A549 (cell line): ENCODE measurements at regions of chr12 and their contacts with region 1.

Region 1: DNA sequence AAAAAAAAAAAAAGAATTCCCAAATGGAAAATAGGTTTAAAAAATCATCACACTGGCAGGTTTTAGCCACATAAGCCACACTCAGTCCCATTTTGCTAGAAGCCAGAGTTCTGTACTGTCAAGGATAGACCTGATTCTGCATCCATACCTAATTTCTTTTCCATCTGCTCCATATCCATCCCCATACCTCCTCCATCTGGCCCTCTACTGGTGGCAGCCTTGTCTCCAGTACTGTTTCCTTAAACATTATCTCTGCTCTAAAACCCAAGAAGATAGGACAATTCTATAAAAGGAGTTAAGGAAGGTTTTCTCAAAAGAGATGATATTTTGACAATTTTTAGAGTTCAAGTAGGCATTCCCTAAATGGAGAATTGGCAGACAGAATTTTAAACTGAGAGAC is 26.0 kb upstream of the RXYLT1 start:
- DNase-seq: peak; percentile 12 to 22
- ATAC-seq: peak; percentile 66 to 89; a peak in 5 of 6 replicates
- H3K4me3 ChIP-seq: no peak overlapping the region
- H3K27ac ChIP-seq: no peak overlapping the region
- H3K4me1 ChIP-seq: no peaks in the 10 kb centered on the region
- CTCF ChIP-seq: 0 out of 3 replicates have a peak, but pooled peaks have one; percentile 12
- EP300 ChIP-seq: no peak
- POLR2A ChIP-seq: no peak
- RAD21 ChIP-seq: peak in 1 of 2 experiments; percentile 27; a peak in 1 of 5 replicates

Region 2: GRCh38 chr12:63766498-63766897 is 12.8 kb after region 1 on chr12:
- CTCF ChIA-PET with region 1: interaction called, 23 read pairs
- POLR2A ChIA-PET with region 1: no interaction called
- DNase-seq: no peak
- ATAC-seq: no peak
- H3K4me3 ChIP-seq: no peak overlapping the region
- H3K27ac ChIP-seq: no peak overlapping the region
- H3K4me1 ChIP-seq: no peaks in the 10 kb centered on the region
- CTCF ChIP-seq: no peak; the same call in 1 of the 3 replicates
- EP300 ChIP-seq: no peak
- POLR2A ChIP-seq: no peak
- RAD21 ChIP-seq: peak; percentile 23 to 36; a peak in 3 of 5 replicates